Heart right ventricle (tissue), 16 donors: ENCODE measurements at regions of chr15 and their contacts with region 1.

Region 1: DNA sequence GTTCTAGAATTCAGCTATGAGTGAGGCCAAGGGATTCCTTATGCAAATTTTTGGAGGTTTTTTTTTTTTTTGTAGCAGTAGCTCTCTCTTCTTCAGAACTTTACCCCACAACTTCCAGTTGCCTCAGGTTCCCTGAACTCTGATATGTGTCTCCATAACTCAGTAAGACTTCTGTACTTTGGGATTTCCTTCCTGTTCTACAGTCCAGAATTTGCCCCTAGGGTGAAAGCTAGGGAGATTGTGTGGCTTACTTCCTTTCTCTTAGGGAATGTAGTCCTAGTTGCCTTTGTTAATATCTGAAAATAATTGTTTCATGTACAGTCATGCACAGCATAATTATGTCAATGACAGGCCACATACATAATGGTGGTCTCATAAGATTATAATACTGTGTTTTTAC is 30.8 kb downstream of the LRRC28 start:
- DNase-seq: no peak
- ATAC-seq: peak in 5 of 8 donors; percentile 20 to 59 (median 47)
- H3K4me3 ChIP-seq: no peak overlapping the region
- H3K27ac ChIP-seq: peak overlapping the region in 2 of 10 donors; percentile 49 to 70
- H3K4me1 ChIP-seq: peaks cover 0 to 23% (median 15%) of the 10 kb centered on the region in 9 donors
- H3K27me3 ChIP-seq: no peaks in the 10 kb centered on the region
- CTCF ChIP-seq: no peak

Region 2: GRCh38 chr15:99213187-99213811 is 68.8 kb before region 1 on chr15:
- intact Hi-C with region 1: no loop called
- DNase-seq: peak; percentile 77 to 84
- ATAC-seq: peak; percentile 74 to 91 (median 86)
- H3K4me3 ChIP-seq: no peak overlapping the region
- H3K27ac ChIP-seq: peak overlapping the region in 7 of 10 donors; percentile 7 to 80 (median 42)
- H3K4me1 ChIP-seq: peaks cover 0 to 23% (median 9%) of the 10 kb centered on the region in 9 donors
- H3K27me3 ChIP-seq: no peaks in the 10 kb centered on the region
- CTCF ChIP-seq: peak; percentile 80 to 96 (median 94)

Region 3: GRCh38 chr15:99335508-99335907 is 53.4 kb after region 1 on chr15:
- intact Hi-C with region 1: loop called in 2 of 10 experiments (anchors 5 to 10 kb)
- DNase-seq: peak in 1 of 2 donors; percentile 9
- ATAC-seq: peak in 6 of 8 donors; percentile 52 to 96 (median 74)
- H3K4me3 ChIP-seq: no peak overlapping the region
- H3K27ac ChIP-seq: no peak overlapping the region
- H3K4me1 ChIP-seq: peaks cover 0 to 16% (median 0%) of the 10 kb centered on the region in 9 donors
- H3K27me3 ChIP-seq: no peaks in the 10 kb centered on the region
- CTCF ChIP-seq: no peak

Region 4: GRCh38 chr15:99361541-99362185 is 79.5 kb after region 1 on chr15:
- intact Hi-C with region 1: loop called in 1 of 10 experiments (anchors 5 kb)
- DNase-seq: no peak
- ATAC-seq: no peak
- H3K4me3 ChIP-seq: no peak overlapping the region
- H3K27ac ChIP-seq: no peak overlapping the region
- H3K4me1 ChIP-seq: no peaks in the 10 kb centered on the region
- H3K27me3 ChIP-seq: no peaks in the 10 kb centered on the region
- CTCF ChIP-seq: peak; percentile 19 to 62 (median 48)

Region 5: GRCh38 chr15:99565299-99566156 is 283.4 kb after region 1 on chr15 and contains the start of gene MEF2A:
- intact Hi-C with region 1: loop called in 1 of 10 experiments (anchors 10 kb)
- DNase-seq: peak; percentile 96 to 97
- ATAC-seq: peak; percentile 83 to 91 (median 86)
- H3K4me3 ChIP-seq: peak within 1 kb of the TSS; percentile 68 to 91 (median 84)
- H3K27ac ChIP-seq: peak within 1 kb of the TSS; percentile 93 to 100 (median 99)
- H3K4me1 ChIP-seq: peaks cover 6 to 62% (median 42%) of the 10 kb centered on the region in 9 donors
- H3K27me3 ChIP-seq: no peaks in the 10 kb centered on the region
- CTCF ChIP-seq: no peak
- total RNA-seq, gene MEF2A: 121 to 194 (median 173) TPM

Region 6: DNA sequence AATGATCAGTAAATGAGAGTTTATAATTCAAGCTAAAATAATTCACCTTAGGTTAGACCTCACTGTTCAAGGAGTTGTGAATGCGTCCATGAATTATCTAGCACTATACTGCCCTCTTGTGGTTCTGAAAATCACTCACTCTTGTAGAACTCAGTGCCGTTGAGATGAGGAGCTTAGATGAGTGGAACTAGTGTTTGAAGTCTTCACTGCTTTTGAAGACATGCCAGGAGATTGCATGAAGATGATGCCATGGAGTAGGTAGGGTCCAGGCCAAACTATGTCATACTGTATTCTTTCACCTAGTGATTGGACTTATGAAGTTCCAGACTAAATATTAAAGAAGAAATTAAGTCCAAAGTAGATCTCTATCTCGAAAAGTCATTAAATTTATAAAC is 422.3 kb after region 1 on chr15:
- intact Hi-C with region 1: loop called in 9 of 10 experiments (anchors 2 to 5 kb)
- DNase-seq: peak in 1 of 2 donors; percentile 78
- ATAC-seq: peak; percentile 52 to 88 (median 80)
- H3K4me3 ChIP-seq: peak overlapping the region in 2 of 10 donors; percentile 3 to 13
- H3K27ac ChIP-seq: peak overlapping the region; percentile 59 to 92 (median 83)
- H3K4me1 ChIP-seq: peaks cover 11 to 76% (median 55%) of the 10 kb centered on the region in 9 donors
- H3K27me3 ChIP-seq: no peaks in the 10 kb centered on the region
- CTCF ChIP-seq: peak; percentile 44 to 87 (median 79)

Region 7: DNA sequence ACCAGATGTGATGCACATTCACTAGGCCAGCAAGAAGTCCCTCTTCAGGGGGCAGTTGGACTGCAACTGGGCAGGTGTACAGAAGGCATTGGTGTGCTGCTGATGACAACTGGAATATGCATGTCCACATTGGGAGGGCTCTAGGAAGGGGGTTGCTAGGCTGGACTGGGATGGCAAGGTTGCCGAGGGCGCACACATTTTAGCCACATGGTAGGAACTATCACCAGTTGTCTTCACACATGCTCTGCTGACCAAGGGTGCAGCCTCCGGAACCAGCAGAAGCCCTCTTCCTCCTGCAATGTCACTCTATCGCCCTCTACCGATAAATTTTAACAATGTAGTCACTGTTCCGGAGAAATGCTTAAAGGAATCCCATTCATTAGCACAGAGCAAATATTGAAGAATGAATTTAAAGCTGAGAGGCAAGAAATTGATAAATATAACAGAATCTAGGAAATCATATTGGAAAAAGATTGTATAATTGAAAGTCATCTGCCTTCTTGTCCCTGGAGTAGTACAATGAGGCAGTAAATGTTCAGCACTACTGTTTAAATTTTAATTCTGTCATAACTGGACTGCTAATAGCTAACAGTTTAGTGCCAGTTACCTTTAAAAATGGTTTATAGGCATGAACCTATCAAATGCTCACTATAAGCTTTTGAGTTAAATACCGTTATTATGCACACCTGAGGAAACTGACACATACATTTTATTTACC is 473.7 kb after region 1 on chr15:
- intact Hi-C with region 1: loop called in 5 of 10 experiments (anchors 1 to 10 kb)
- DNase-seq: peak in 1 of 2 donors; percentile 50
- ATAC-seq: peak; percentile 79 to 91 (median 89)
- H3K4me3 ChIP-seq: no peak overlapping the region
- H3K27ac ChIP-seq: no peak overlapping the region
- H3K4me1 ChIP-seq: peaks cover 0 to 4% (median 0%) of the 10 kb centered on the region in 9 donors
- H3K27me3 ChIP-seq: no peaks in the 10 kb centered on the region
- CTCF ChIP-seq: peak; percentile 68 to 92 (median 89)